Activated B cell treated with CpG ODN at 0.5 μM for 24 hours (primary cell): ENCODE measurements at regions of chr15 and their contacts with region 1.

Region 1: GRCh38 chr15:89760303-89761008 is 9.4 kb upstream of the MESP1 start:
- DNase-seq: peak; percentile 75
- ATAC-seq: peak; percentile 90
- H3K4me3 Mint-ChIP-seq: no peak overlapping the region
- H3K27ac Mint-ChIP-seq: no peak overlapping the region
- H3K4me1 Mint-ChIP-seq: peaks cover 3% of the 10 kb centered on the region
- H3K27me3 Mint-ChIP-seq: no peaks in the 10 kb centered on the region
- CTCF ChIP-seq: peak; percentile 73

Region 2: GRCh38 chr15:89863918-89864317 is 103.5 kb after region 1 on chr15:
- CTCF ChIA-PET with region 1: interaction called, 13 read pairs
- POLR2A ChIA-PET with region 1: no interaction called
- intact Hi-C with region 1: no loop called
- DNase-seq: no peak
- ATAC-seq: no peak
- H3K4me3 Mint-ChIP-seq: no peak overlapping the region
- H3K27ac Mint-ChIP-seq: no peak overlapping the region
- H3K4me1 Mint-ChIP-seq: peaks cover 10% of the 10 kb centered on the region
- H3K27me3 Mint-ChIP-seq: no peaks in the 10 kb centered on the region
- CTCF ChIP-seq: no peak

Region 3: DNA sequence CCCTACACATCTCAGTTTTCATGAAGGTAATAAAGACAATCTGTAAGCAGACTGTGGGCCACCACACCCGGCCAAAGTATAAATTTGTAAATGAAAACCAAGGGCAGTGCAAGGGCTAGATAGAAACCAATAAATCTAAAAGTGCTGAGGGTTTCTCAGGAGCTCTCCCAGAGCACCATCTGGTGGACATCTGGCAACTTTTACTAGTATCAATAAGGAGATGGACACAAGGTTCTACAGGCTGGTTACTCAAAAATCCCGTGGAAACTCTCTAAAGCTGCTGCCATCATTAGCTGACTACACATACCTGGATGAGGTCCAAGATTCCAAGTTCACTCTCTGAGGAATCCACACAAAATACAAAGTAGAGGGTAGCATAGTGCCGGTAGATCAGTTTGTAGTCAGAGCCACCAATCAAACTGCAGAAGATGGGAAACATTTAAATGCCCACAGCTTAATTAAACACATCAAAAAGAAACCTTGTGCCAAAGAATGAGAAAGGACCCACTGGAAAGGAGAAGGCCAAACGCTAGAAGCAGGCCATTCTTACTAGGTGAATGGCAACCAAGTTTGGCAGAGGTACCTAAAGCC is 127.9 kb after region 1 on chr15:
- CTCF ChIA-PET with region 1: interaction called, 16 read pairs
- POLR2A ChIA-PET with region 1: no interaction called
- intact Hi-C with region 1: no loop called
- DNase-seq: no peak
- ATAC-seq: no peak
- H3K4me3 Mint-ChIP-seq: no peak overlapping the region
- H3K27ac Mint-ChIP-seq: no peak overlapping the region
- H3K4me1 Mint-ChIP-seq: peaks cover 30% of the 10 kb centered on the region
- H3K27me3 Mint-ChIP-seq: no peaks in the 10 kb centered on the region
- CTCF ChIP-seq: no peak

Region 4: GRCh38 chr15:90086868-90087268 is 326.4 kb after region 1 on chr15:
- CTCF ChIA-PET with region 1: interaction called, 26 read pairs
- POLR2A ChIA-PET with region 1: no interaction called
- intact Hi-C with region 1: loop called (anchors 2 kb)
- DNase-seq: peak; percentile 45
- ATAC-seq: peak; percentile 79
- H3K4me3 Mint-ChIP-seq: no peak overlapping the region
- H3K27ac Mint-ChIP-seq: no peak overlapping the region
- H3K4me1 Mint-ChIP-seq: peaks cover 15% of the 10 kb centered on the region
- H3K27me3 Mint-ChIP-seq: no peaks in the 10 kb centered on the region
- CTCF ChIP-seq: peak; percentile 22